Activated CD8-positive, alpha-beta T cell treated with anti-CD3 and anti-CD28 coated beads for 36 hours (primary cell): ENCODE measurements at regions of chr9 and their contacts with region 1.

Region 1: DNA sequence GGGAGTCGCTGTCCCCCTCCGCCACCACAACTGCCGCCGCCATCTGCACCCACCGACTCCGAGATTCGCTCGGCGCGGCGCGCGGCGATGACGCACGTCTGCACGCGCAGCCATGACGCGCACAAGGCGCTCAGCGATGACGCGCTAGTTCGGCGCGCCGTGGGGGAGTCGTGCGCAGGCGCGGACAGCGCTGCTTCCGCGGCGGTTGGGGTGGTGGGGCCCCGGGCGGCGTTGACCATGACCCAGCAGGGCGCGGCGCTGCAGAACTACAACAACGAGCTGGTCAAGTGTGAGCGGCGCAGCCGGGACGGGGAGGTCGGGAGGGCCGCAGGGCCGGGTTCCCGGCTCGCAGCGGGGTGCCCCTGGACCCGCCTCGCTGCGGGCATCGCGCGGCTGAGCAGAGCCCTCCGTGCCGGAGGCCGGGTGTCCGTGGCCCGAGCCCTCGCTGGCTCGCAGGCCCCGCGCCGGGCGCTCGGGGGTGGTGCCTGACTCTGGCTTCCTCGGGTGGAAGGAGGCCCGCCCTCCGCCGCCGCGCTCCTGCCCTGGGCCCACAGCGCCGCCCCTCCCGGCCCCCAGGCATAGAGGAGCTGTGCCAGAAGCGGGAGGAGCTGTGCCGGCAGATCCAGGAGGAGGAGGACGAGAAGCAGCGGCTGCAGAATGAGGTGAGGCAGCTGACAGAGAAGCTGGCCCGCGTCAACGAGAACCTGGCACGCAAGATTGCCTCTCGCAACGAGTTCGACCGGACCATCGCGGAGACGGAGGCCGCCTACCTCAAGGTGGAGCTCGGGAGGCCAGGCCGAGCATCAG is at the starts of genes ANAPC2 and SSNA1:
- DNase-seq: peak; percentile 92
- ATAC-seq: peak; percentile 84
- H3K4me3 Mint-ChIP-seq: peak within 1 kb of the TSS; percentile 91
- H3K27ac Mint-ChIP-seq: peak within 1 kb of the TSS; percentile 94
- H3K4me1 Mint-ChIP-seq: peaks cover 32% of the 10 kb centered on the region
- H3K27me3 Mint-ChIP-seq: no peaks in the 10 kb centered on the region
- CTCF ChIP-seq: peak; percentile 53
- total RNA-seq, gene ANAPC2: 38.6 to 39.6 TPM
- total RNA-seq, gene SSNA1: 53.3 to 58.4 TPM

Region 2: DNA sequence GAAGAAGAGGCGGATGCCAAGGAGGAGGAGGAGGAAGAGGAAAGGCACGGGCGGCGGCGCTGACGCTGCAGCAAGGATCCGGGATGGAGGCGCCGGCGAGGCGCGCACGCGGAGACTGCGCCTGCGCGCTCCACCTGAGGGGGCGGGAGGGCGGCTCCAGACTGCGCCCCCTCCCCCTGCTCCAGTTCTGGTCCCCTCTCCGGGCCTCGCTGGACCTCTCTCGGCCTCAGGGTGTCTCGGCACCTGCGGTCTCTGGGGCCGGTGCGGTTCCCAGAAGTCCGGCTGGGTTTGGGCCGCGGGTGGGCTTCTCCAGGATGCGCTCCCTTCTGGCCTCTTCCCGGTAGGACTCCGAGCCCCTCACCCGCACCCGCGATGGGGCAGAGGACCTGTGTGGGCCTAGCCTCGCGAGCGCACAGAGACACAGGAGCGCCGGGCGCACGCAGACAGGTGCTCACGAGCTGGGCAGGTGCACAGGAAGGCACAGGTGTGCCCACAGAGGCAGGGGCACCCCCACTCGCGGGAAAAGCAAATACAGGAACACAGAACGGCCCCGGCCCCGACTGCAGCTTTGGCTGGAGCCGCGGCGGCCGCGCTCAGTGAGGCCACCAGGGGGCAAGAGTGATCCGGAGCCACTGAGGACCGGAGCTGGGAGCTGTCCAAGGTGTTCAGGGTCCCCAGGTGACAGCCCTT is 142.4 kb before region 1 on chr9 and contains the start of gene NPDC1:
- CTCF ChIA-PET with region 1: no interaction called
- POLR2A ChIA-PET with region 1: no interaction called
- intact Hi-C with region 1: no loop called
- DNase-seq: peak; percentile 92
- ATAC-seq: peak; percentile 84
- H3K4me3 Mint-ChIP-seq: peak within 1 kb of the TSS; percentile 63
- H3K27ac Mint-ChIP-seq: no peak within 1 kb of the TSS
- H3K4me1 Mint-ChIP-seq: peaks cover 10% of the 10 kb centered on the region
- H3K27me3 Mint-ChIP-seq: peaks cover 42% of the 10 kb centered on the region
- CTCF ChIP-seq: peak; percentile 83
- total RNA-seq, gene NPDC1: 18.2 to 21.2 TPM

Region 3: DNA sequence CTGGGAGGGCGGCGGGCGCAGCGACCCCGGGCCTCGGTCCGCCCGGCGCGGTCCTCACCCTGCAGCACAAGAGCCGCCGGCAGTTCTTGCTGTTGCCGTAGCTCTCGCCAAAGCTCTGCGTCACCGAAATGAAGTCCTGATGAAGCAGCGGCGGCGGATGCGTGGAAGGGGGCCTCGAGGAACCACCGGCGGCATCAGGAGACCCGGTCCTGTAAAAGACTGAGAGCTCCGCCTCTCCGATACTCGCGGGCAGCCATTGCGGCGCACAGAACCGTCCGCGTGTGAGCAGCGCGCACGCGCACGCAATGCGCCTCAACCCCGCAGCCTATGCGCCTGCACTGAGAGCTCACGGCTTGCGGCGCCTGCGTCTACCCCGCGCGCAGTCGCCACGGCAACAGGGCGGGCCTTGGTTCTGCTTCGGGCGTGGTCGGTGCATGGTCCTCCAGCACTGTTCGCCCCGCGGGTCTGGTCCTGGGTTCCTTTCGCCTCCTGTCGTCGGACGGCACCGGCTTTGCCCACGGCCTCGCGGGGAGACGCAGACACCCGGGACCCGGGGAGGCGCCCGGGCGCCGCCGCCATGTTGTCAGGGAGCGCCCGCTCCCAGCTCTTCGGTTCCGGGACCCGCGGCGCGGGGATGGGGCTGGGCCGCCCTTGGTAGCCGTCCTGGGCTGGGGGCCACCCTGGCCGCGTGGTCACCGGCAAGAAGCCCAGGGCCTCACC is 59.1 kb before region 1 on chr9:
- CTCF ChIA-PET with region 1: interaction called, 5 read pairs
- POLR2A ChIA-PET with region 1: interaction called, 16 read pairs
- intact Hi-C with region 1: no loop called
- DNase-seq: peak; percentile 91
- ATAC-seq: peak; percentile 96
- H3K4me3 Mint-ChIP-seq: peak overlapping the region; percentile 87
- H3K27ac Mint-ChIP-seq: peak overlapping the region; percentile 68
- H3K4me1 Mint-ChIP-seq: peaks cover 17% of the 10 kb centered on the region
- H3K27me3 Mint-ChIP-seq: peaks cover 4% of the 10 kb centered on the region
- CTCF ChIP-seq: no peak

Region 4: GRCh38 chr9:137200311-137201204 is 11.9 kb after region 1 on chr9 and contains the start of gene TPRN:
- CTCF ChIA-PET with region 1: interaction called, 15 read pairs
- POLR2A ChIA-PET with region 1: interaction called, 9 read pairs
- intact Hi-C with region 1: no loop called
- DNase-seq: peak; percentile 99
- ATAC-seq: peak; percentile 98
- H3K4me3 Mint-ChIP-seq: peak within 1 kb of the TSS; percentile 82
- H3K27ac Mint-ChIP-seq: peak within 1 kb of the TSS; percentile 77
- H3K4me1 Mint-ChIP-seq: peaks cover 22% of the 10 kb centered on the region
- H3K27me3 Mint-ChIP-seq: no peaks in the 10 kb centered on the region
- CTCF ChIP-seq: no peak
- total RNA-seq, gene TPRN: 5.7 to 6.6 TPM